Thyroid gland (tissue), 4 donors: ENCODE measurements at regions of chr16 and their contacts with region 1.

Region 1: GRCh38 chr16:55842369-55843104 is 9.6 kb upstream of the CES1 start:
- DNase-seq: peak; percentile 3 to 5
- H3K4me3 ChIP-seq: no peak overlapping the region
- H3K27ac ChIP-seq: no peak overlapping the region
- H3K4me1 ChIP-seq: no peaks in the 10 kb centered on the region
- H3K27me3 ChIP-seq: no peaks in the 10 kb centered on the region
- CTCF ChIP-seq: peak; percentile 55 to 80 (median 66)
- POLR2A ChIP-seq: no peak

Region 2: GRCh38 chr16:55655860-55656695 is 186.5 kb before region 1 on chr16 and contains the start of gene SLC6A2:
- intact Hi-C with region 1: no loop called
- DNase-seq: peak in 1 of 2 donors; percentile 7
- H3K4me3 ChIP-seq: no peak within 1 kb of the TSS
- H3K27ac ChIP-seq: no peak within 1 kb of the TSS
- H3K4me1 ChIP-seq: peaks cover 3 to 12% of the 10 kb centered on the region in 2 donors
- H3K27me3 ChIP-seq: peaks cover 10% of the 10 kb centered on the region
- CTCF ChIP-seq: no peak
- POLR2A ChIP-seq: no peak
- total RNA-seq, gene SLC6A2: not detected

Region 3: GRCh38 chr16:55706739-55707384 is 135.7 kb before region 1 on chr16:
- intact Hi-C with region 1: loop called (anchors 5 kb)
- DNase-seq: no peak
- H3K4me3 ChIP-seq: no peak overlapping the region
- H3K27ac ChIP-seq: no peak overlapping the region
- H3K4me1 ChIP-seq: no peaks in the 10 kb centered on the region
- H3K27me3 ChIP-seq: no peaks in the 10 kb centered on the region
- CTCF ChIP-seq: no peak
- POLR2A ChIP-seq: no peak

Region 4: GRCh38 chr16:55999683-56000082 is 157.1 kb after region 1 on chr16:
- intact Hi-C with region 1: no loop called
- DNase-seq: no peak
- H3K4me3 ChIP-seq: no peak overlapping the region
- H3K27ac ChIP-seq: no peak overlapping the region
- H3K4me1 ChIP-seq: no peaks in the 10 kb centered on the region
- H3K27me3 ChIP-seq: no peaks in the 10 kb centered on the region
- CTCF ChIP-seq: no peak
- POLR2A ChIP-seq: no peak